PC-9 (cell line): ENCODE measurements at regions of chr3 and their contacts with region 1.

Region 1: GRCh38 chr3:155323063-155323666 is 29.7 kb upstream of the STRIT1 start:
- DNase-seq: peak; percentile 39 to 62
- H3K4me3 ChIP-seq: no peak overlapping the region
- H3K27ac ChIP-seq: no peak overlapping the region
- H3K4me1 ChIP-seq: no peaks in the 10 kb centered on the region
- H3K27me3 ChIP-seq: no peaks in the 10 kb centered on the region
- CTCF ChIP-seq: peak; percentile 91

Region 2: GRCh38 chr3:154323891-154324738 is 999.0 kb before region 1 on chr3 and contains the start of gene DHX36:
- CTCF ChIA-PET with region 1: no interaction called
- POLR2A ChIA-PET with region 1: no interaction called
- intact Hi-C with region 1: loop called (anchors 5 kb)
- DNase-seq: peak; percentile 73 to 79
- H3K4me3 ChIP-seq: peak within 1 kb of the TSS; percentile 75
- H3K27ac ChIP-seq: peak within 1 kb of the TSS; percentile 71
- H3K4me1 ChIP-seq: peaks cover 28% of the 10 kb centered on the region
- H3K27me3 ChIP-seq: no peaks in the 10 kb centered on the region
- CTCF ChIP-seq: no peak; the same call in 1 of the 2 replicates
- total RNA-seq, gene DHX36: 64.2 and 87.2 TPM in 2 replicates

Region 3: GRCh38 chr3:154904328-154904727 is 418.8 kb before region 1 on chr3:
- CTCF ChIA-PET with region 1: no interaction called
- POLR2A ChIA-PET with region 1: no interaction called
- intact Hi-C with region 1: loop called (anchors 1 kb)
- DNase-seq: peak in 1 of 2 experiments; percentile 3
- H3K4me3 ChIP-seq: no peak overlapping the region
- H3K27ac ChIP-seq: no peak overlapping the region
- H3K4me1 ChIP-seq: no peaks in the 10 kb centered on the region
- H3K27me3 ChIP-seq: no peaks in the 10 kb centered on the region
- CTCF ChIP-seq: peak; percentile 64; the same call in 1 of the 2 replicates

Region 4: GRCh38 chr3:154939334-154939733 is 383.8 kb before region 1 on chr3:
- CTCF ChIA-PET with region 1: no interaction called
- POLR2A ChIA-PET with region 1: no interaction called
- intact Hi-C with region 1: no loop called
- DNase-seq: no peak
- H3K4me3 ChIP-seq: no peak overlapping the region
- H3K27ac ChIP-seq: no peak overlapping the region
- H3K4me1 ChIP-seq: no peaks in the 10 kb centered on the region
- H3K27me3 ChIP-seq: no peaks in the 10 kb centered on the region
- CTCF ChIP-seq: no peak

Region 5: GRCh38 chr3:155018621-155019330 is 304.4 kb before region 1 on chr3:
- CTCF ChIA-PET with region 1: no interaction called
- POLR2A ChIA-PET with region 1: no interaction called
- intact Hi-C with region 1: loop called (anchors 5 kb)
- DNase-seq: peak; percentile 21 to 42
- H3K4me3 ChIP-seq: no peak overlapping the region
- H3K27ac ChIP-seq: peak overlapping the region; percentile 17; the same call in 1 of the 2 replicates
- H3K4me1 ChIP-seq: peaks cover 16% of the 10 kb centered on the region
- H3K27me3 ChIP-seq: no peaks in the 10 kb centered on the region
- CTCF ChIP-seq: no peak

Region 6: GRCh38 chr3:155070932-155071387 is 252.2 kb before region 1 on chr3:
- CTCF ChIA-PET with region 1: no interaction called
- POLR2A ChIA-PET with region 1: no interaction called
- intact Hi-C with region 1: no loop called
- DNase-seq: no peak
- H3K4me3 ChIP-seq: no peak overlapping the region
- H3K27ac ChIP-seq: no peak overlapping the region
- H3K4me1 ChIP-seq: peaks cover 4% of the 10 kb centered on the region
- H3K27me3 ChIP-seq: no peaks in the 10 kb centered on the region
- CTCF ChIP-seq: no peak

Region 7: DNA sequence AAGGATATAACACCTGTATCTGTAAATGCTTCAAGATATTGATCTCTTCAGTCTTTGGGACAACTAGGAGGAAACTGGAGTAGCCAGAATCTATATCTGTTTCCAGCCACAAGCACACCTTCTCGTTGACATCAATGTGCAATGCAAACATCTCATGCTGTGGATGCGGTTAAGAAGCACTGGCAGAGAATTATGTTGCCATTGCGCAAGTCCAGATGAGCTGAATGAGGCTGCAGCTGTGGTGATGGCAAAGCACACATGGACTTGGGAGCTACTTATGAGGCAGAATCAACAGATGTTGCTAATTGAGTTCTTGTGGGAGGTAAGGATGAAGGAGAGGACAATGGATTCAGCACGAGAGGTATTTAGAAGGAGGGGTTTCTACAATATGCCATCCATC is 120.5 kb before region 1 on chr3:
- CTCF ChIA-PET with region 1: no interaction called
- POLR2A ChIA-PET with region 1: no interaction called
- intact Hi-C with region 1: loop called (anchors 10 kb)
- DNase-seq: no peak
- H3K4me3 ChIP-seq: no peak overlapping the region
- H3K27ac ChIP-seq: no peak overlapping the region
- H3K4me1 ChIP-seq: no peaks in the 10 kb centered on the region
- H3K27me3 ChIP-seq: no peaks in the 10 kb centered on the region
- CTCF ChIP-seq: no peak

Region 8: DNA sequence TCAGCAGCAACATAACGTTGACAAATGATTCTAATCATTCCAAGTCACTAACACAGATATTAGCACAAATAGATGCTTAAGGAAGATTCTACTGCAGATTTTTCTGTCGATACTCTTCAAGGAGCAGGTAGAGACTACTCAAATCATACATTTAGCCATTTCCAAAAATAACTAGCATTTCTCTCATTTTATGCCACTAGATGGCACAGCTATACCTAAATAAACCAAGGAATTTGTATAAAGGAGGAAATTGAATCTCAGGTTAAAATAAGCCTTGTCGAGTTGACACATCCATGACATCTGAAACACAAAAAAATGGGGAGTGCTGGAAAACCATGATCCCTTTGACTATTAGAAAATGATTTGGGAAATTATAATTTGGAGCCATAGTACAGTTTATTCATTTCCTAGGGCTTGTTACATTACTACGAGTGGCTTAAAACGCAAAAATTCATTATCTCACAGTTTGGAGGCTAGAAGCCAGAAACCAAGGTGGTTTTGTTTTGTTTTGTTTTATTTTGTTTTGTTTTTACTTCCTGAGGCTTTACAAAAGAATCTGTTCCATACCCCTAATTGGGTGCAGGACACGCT is 29.8 kb after region 1 on chr3:
- CTCF ChIA-PET with region 1: no interaction called
- POLR2A ChIA-PET with region 1: no interaction called
- intact Hi-C with region 1: no loop called
- DNase-seq: peak in 1 of 2 experiments; percentile 55
- H3K4me3 ChIP-seq: no peak overlapping the region
- H3K27ac ChIP-seq: no peak overlapping the region
- H3K4me1 ChIP-seq: no peaks in the 10 kb centered on the region
- H3K27me3 ChIP-seq: no peaks in the 10 kb centered on the region
- CTCF ChIP-seq: peak; percentile 84